ENCODE measurements at regions of chr1 and their contacts with region 1.

Region 1: DNA sequence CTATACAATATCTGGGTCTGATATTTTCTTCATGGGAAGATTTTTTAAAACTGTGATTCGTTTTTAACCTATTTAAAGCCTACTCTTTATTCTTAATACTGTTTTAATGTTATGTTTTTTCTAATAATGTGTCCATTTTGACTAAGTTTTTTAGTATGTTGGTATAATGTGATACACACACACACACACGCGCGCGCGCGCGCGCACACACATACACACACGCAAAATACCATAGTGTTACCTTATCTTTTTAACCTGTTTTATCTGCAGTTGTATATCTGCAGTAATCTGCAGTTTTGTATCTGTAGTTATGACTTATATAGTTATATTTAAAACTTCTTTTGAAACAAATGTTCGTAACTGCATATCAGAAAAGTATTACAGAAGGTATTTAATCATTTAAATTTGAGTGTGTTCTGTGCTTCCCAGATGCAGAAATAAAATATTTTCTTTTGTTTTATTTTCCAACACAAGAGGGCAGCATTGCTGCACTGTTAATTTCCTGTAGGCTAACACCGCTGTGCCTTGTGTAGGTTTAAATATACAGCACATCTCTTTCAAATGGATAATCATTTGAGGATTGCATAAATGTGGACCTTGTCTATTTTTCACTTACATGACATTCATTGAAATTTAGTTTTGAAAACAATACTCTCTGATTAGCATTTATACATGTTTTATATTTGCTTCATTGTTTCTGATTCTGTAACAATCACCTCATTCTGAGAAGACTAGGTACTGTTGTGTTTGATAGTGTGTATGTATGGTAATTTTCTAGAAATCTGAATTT is 166.1 kb downstream of the PDE4B start:
- DNase-seq: peak; percentile 60
- ATAC-seq: peak; percentile 62; the same call in 1 of the 2 replicates
- H3K4me3 ChIP-seq: no peak overlapping the region
- H3K27ac ChIP-seq: no peak overlapping the region
- H3K4me1 ChIP-seq: no peaks in the 10 kb centered on the region
- H3K27me3 ChIP-seq: no peaks in the 10 kb centered on the region
- CTCF ChIP-seq: peak; percentile 84
- POLR2A ChIP-seq: no peak
- RAD21 ChIP-seq: peak; percentile 87

Region 2: DNA sequence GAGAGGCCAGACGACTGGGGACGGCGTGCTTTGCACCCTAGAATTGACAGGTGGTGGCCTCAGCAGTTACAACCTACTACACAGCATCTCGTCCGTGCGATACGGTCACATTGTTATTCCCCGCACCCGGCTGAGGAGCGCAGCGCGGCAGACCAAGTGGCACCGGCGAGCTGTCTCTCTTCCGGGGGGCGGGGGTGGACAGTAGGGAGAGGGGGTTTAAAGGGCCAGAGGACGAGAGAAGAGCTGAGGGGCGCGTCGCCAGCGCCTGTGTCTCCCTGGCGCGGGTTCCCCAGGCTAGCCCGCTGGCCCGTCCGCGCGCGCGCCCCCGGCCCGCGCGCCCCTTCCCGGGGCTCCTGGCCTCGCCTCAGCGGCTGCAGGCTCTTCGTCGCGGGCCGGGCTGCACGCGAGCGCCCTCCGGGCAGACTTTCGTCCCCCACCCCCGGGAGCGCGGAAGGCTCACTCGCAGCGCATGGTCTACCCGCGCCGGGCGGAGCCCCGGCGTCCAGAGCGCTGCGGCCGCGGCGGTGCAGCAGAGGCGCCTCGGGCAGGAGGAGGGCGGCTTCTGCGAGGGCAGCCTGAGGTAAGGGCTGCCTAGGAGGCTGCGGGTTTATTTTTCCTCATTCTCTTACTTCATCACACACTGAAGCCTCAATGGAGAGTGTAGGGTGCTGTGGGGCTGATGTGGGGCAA is 165.9 kb before region 1 on chr1 and contains the start of gene PDE4B:
- CTCF ChIA-PET with region 1: no interaction called
- POLR2A ChIA-PET with region 1: no interaction called
- dilution Hi-C with region 1: no loop called
- in situ Hi-C with region 1: no loop called
- intact Hi-C with region 1: loop called (anchors 10 kb)
- DNase-seq: peak; percentile 40
- ATAC-seq: peak; percentile 83
- H3K4me3 ChIP-seq: peak within 1 kb of the TSS; percentile 53
- H3K27ac ChIP-seq: no peak within 1 kb of the TSS
- H3K4me1 ChIP-seq: peaks cover 2% of the 10 kb centered on the region; the same call in 1 of the 2 replicates
- H3K27me3 ChIP-seq: peaks cover 4% of the 10 kb centered on the region
- CTCF ChIP-seq: no peak
- POLR2A ChIP-seq: no peak
- RAD21 ChIP-seq: no peak
- total RNA-seq, gene PDE4B: 15.6 and 21.3 TPM in 2 replicates

Region 3: GRCh38 chr1:66350001-66350547 is 391.3 kb after region 1 on chr1:
- CTCF ChIA-PET with region 1: no interaction called
- POLR2A ChIA-PET with region 1: no interaction called
- dilution Hi-C with region 1: no loop called
- in situ Hi-C with region 1: no loop called
- intact Hi-C with region 1: loop called (anchors 10 kb)
- DNase-seq: peak; percentile 34
- ATAC-seq: peak; percentile 33; the same call in 1 of the 2 replicates
- H3K4me3 ChIP-seq: no peak overlapping the region; the same call in 1 of the 2 replicates
- H3K27ac ChIP-seq: peak overlapping the region; percentile 47
- H3K4me1 ChIP-seq: peaks cover 19% of the 10 kb centered on the region
- H3K27me3 ChIP-seq: no peaks in the 10 kb centered on the region
- CTCF ChIP-seq: no peak
- POLR2A ChIP-seq: no peak
- RAD21 ChIP-seq: no peak

Region 4: DNA sequence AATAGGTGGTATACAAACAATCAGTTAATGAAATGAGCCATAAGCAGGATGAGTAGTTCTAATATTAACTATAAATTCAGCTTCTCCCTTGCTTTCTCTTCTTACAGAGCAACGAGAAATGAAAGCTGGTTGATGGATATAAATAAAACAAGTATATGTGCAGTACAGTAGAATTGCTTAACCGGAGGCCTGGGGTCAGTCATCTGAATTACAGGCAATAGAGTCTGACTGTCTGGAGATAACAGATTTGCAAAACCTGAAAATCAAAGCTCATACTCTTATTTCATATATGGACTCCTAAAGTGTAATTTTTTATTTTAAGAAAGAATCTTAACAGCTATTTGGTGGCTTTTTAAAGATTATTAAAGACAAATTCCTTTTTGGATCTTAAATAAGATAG is 532.1 kb after region 1 on chr1:
- CTCF ChIA-PET with region 1: no interaction called
- POLR2A ChIA-PET with region 1: no interaction called
- dilution Hi-C with region 1: no loop called
- in situ Hi-C with region 1: no loop called
- intact Hi-C with region 1: no loop called
- DNase-seq: peak; percentile 63
- ATAC-seq: peak; percentile 69
- H3K4me3 ChIP-seq: no peak overlapping the region
- H3K27ac ChIP-seq: no peak overlapping the region
- H3K4me1 ChIP-seq: peaks cover 13% of the 10 kb centered on the region; the same call in 1 of the 2 replicates
- H3K27me3 ChIP-seq: no peaks in the 10 kb centered on the region
- CTCF ChIP-seq: no peak
- POLR2A ChIP-seq: no peak
- RAD21 ChIP-seq: no peak

Region 5: GRCh38 chr1:66503841-66504470 is 545.2 kb after region 1 on chr1:
- CTCF ChIA-PET with region 1: no interaction called
- POLR2A ChIA-PET with region 1: no interaction called
- dilution Hi-C with region 1: no loop called
- in situ Hi-C with region 1: no loop called
- intact Hi-C with region 1: loop called (anchors 2 kb)
- DNase-seq: peak; percentile 81
- ATAC-seq: peak; percentile 87
- H3K4me3 ChIP-seq: no peak overlapping the region
- H3K27ac ChIP-seq: no peak overlapping the region
- H3K4me1 ChIP-seq: 0 out of 2 replicates have a peak, but pooled peaks cover 2% of the 10 kb centered on the region
- H3K27me3 ChIP-seq: no peaks in the 10 kb centered on the region
- CTCF ChIP-seq: peak; percentile 70
- POLR2A ChIP-seq: no peak
- RAD21 ChIP-seq: peak; percentile 86

Region 6: DNA sequence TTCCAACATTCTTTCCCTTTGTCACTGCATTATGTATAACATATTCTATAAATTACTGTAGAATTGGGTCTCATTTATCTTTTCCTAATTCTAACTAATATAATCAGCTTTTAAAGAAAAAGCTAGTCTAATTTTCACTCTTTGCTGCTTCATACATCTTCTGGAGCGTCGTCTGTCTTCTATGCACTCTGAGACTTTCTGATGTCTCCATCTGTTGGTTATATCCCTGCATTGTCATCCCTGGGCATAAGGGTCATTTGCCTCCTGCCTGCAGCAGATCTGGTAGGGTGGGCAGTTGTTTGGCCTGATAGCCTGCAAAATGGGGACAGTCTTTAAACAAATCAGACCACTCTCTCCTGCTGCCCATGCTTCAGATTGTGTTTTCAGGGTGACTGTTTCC is 752.7 kb after region 1 on chr1:
- CTCF ChIA-PET with region 1: no interaction called
- POLR2A ChIA-PET with region 1: no interaction called
- dilution Hi-C with region 1: no loop called
- in situ Hi-C with region 1: loop called (anchors 25 kb)
- intact Hi-C with region 1: no loop called
- DNase-seq: no peak
- ATAC-seq: no peak; the same call in 1 of the 2 replicates
- H3K4me3 ChIP-seq: no peak overlapping the region
- H3K27ac ChIP-seq: no peak overlapping the region
- H3K4me1 ChIP-seq: no peaks in the 10 kb centered on the region
- H3K27me3 ChIP-seq: no peaks in the 10 kb centered on the region
- CTCF ChIP-seq: 0 out of 2 replicates have a peak, but pooled peaks have one; percentile 17
- POLR2A ChIP-seq: no peak
- RAD21 ChIP-seq: no peak

Region 7: GRCh38 chr1:66725885-66726665 is 767.3 kb after region 1 on chr1:
- CTCF ChIA-PET with region 1: no interaction called
- POLR2A ChIA-PET with region 1: no interaction called
- dilution Hi-C with region 1: no loop called
- in situ Hi-C with region 1: loop called (anchors 25 kb)
- intact Hi-C with region 1: loop called (anchors 10 kb)
- DNase-seq: peak; percentile 81
- ATAC-seq: peak; percentile 70
- H3K4me3 ChIP-seq: no peak overlapping the region
- H3K27ac ChIP-seq: no peak overlapping the region
- H3K4me1 ChIP-seq: no peaks in the 10 kb centered on the region
- H3K27me3 ChIP-seq: no peaks in the 10 kb centered on the region
- CTCF ChIP-seq: peak; percentile 91
- POLR2A ChIP-seq: no peak
- RAD21 ChIP-seq: peak; percentile 75